Right ventricle myocardium superior (tissue), 1 donor: ENCODE measurements at regions of chr17 and their contacts with region 1.

Region 1: DNA sequence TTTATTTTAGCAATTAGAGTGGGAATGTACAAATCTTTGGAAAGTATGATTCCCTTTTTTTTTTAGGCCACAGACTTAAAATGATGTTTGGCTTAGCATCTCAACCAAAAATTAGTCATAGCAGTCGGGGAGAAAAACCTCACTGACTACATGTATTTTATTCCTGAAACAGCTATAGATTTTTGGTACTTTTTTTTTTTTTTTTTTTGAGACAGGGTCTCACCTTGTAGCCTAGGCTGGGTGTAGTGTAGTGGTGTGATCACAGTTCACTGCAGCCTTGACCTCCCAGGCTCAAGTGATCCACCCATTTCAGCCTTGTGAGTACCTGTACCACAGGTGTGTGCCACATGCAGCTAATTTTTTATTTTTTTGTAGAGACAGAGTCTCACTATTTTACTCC is 23.4 kb downstream of the RNFT1 start:
- DNase-seq: no peak
- ATAC-seq: no peak

Region 2: GRCh38 chr17:59668816-59669215 is 272.3 kb before region 1 on chr17:
- intact Hi-C with region 1: loop called (anchors 10 kb)
- DNase-seq: no peak
- ATAC-seq: no peak

Region 3: DNA sequence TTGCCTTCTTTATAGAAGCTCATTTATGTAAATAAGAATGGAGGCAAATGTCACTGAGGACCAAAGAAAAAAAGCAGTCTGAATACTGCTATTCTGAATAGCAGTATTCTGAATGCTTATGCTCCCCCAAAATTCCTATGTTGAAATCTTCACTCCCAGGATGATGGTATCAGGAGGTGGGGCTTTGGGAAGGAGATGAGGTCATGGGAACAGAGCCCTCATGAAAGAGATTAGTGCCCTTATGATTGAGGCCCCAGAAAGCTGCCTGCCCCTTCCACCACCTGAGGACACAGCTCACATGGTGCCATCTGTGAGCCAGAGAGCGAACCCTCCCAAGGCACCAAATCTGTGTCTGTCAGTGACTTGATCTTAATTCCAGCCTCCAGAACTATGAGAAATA is 108.8 kb after region 1 on chr17:
- intact Hi-C with region 1: loop called (anchors 5 kb)
- DNase-seq: no peak
- ATAC-seq: no peak